Heart right ventricle (tissue), 16 donors: ENCODE measurements at regions of chr16 and their contacts with region 1.

Region 1: DNA sequence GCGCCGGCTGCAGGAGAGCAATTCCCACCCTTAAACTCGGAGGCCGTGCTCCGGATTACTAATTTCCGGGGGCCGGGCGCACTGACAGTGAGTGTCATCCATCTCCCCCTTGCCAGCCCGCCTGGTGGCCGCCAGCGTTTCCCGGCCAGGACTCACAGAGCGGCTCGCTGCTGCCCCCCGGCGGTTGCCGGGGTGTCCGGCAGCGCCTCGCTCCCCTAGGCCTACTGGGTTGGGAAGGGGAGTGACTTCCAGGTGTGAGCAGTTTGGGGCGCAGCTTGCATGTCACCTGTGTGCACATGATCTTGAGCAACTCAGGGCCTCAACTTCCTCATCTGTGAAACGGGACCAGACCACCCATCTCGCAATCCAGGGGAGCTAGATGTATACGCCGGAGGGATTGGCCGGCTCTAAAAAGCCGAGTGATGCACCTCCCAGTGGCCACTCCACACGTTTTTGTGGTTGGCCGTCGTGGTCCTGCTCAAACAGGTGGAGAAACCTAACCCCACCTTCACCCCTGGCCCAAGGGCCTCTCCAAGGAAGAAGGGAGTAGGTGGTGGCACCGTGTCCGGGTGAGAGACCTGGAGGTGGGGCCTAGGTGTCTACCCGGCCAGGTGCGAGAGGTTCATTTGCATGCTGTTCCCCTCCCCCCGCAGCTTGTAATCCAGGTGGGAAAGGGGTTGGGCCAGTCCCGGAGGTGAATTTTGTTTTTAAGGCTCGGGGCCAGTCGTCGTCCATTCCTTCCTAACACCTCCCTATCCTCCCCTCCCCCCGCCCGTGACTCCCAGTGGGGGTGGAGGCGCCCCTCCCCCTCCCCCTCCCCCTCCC is 2.4 kb upstream of the GSE1 start:
- DNase-seq: peak; percentile 84 to 88
- ATAC-seq: peak; percentile 22 to 69 (median 41)
- H3K4me3 ChIP-seq: peak overlapping the region; percentile 43 to 73 (median 65)
- H3K27ac ChIP-seq: peak overlapping the region; percentile 72 to 98 (median 92)
- H3K4me1 ChIP-seq: peaks cover 27 to 70% (median 56%) of the 10 kb centered on the region in 9 donors
- H3K27me3 ChIP-seq: no peaks in the 10 kb centered on the region
- CTCF ChIP-seq: peak; percentile 98 to 100 (median 99)

Region 2: GRCh38 chr16:85253084-85253941 is 357.4 kb before region 1 on chr16:
- intact Hi-C with region 1: no loop called
- DNase-seq: peak; percentile 34 to 66
- ATAC-seq: peak; percentile 48 to 85 (median 69)
- H3K4me3 ChIP-seq: no peak overlapping the region
- H3K27ac ChIP-seq: no peak overlapping the region
- H3K4me1 ChIP-seq: peaks cover 0 to 8% (median 0%) of the 10 kb centered on the region in 9 donors
- H3K27me3 ChIP-seq: peaks cover 0 to 8% (median 0%) of the 10 kb centered on the region in 7 donors
- CTCF ChIP-seq: peak; percentile 84 to 95 (median 92)

Region 3: DNA sequence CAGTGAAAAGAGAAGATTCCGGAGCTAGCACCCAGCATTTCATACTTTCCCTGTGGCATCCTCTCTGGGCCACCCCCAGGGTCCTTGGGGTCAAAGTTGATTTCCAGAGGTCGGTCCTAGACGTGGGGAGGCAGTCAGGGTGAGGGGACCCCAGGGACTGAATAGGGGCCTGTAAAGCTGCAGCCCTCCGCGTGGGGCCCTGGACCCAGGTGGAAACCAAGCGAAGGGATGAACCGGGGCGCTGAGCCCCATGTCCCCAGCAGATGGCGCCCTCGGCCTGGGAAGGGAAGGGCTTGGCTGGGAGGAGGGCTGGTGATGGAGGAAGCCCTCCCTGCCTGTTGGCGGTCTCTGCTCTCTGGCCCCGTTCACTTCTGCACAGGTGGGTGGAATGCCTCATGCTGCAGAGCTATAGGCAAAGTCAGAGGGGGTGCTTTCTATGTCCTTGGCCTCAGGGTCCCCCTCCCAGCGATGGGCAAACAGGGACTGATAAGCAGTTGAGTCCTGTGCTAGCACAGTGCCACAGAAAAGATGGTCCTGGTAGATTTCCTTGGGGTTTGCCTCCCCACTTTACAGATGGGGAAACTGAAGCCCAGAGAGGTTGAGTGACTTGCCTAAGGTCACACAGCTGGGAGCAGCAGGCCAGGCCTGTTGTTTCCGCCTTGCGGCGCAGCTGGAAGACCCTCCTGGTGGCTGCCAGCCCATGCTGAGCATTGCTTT is 335.0 kb before region 1 on chr16:
- intact Hi-C with region 1: loop called in 1 of 10 experiments (anchors 10 kb)
- DNase-seq: peak; percentile 63 to 78
- ATAC-seq: peak; percentile 48 to 85 (median 71)
- H3K4me3 ChIP-seq: no peak overlapping the region
- H3K27ac ChIP-seq: no peak overlapping the region
- H3K4me1 ChIP-seq: peaks cover 0 to 25% (median 0%) of the 10 kb centered on the region in 9 donors
- H3K27me3 ChIP-seq: no peaks in the 10 kb centered on the region
- CTCF ChIP-seq: peak; percentile 77 to 95 (median 91)

Region 4: DNA sequence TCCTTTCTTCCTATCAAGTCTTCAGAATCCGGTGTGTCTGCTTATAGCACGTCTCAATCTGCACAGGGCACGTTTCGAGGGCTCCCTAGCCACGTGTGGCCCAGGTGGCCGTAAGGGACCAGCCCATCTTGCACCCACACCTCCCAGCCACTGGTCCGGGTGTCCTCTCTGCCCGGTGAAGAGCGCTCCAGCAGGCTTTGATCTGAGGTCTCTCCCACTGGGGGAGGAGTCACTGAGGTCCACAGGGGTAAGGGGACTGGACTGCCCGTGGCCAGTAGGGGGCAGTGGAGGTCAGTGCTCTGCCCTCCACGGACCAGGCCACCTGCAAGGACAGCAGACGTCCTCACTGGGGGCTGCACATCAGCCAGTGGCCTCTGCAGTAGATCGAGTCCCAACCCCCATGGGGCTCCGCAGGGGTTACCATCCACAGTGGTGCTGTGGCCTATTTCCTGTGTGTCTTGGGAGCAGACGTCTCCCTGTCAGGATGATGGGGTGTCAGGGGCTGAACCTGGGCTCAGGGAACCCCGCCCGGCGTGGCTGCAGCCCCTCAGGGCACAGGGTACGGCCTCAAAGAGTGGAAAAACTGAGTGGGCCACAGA is 294.3 kb before region 1 on chr16:
- intact Hi-C with region 1: loop called in 1 of 10 experiments (anchors 10 kb)
- DNase-seq: peak; percentile 51 to 63
- ATAC-seq: peak; percentile 57 to 80 (median 73)
- H3K4me3 ChIP-seq: no peak overlapping the region
- H3K27ac ChIP-seq: no peak overlapping the region
- H3K4me1 ChIP-seq: peaks cover 9 to 53% (median 23%) of the 10 kb centered on the region in 9 donors
- H3K27me3 ChIP-seq: peaks cover 0 to 5% (median 0%) of the 10 kb centered on the region in 7 donors
- CTCF ChIP-seq: peak; percentile 64 to 90 (median 86)

Region 5: DNA sequence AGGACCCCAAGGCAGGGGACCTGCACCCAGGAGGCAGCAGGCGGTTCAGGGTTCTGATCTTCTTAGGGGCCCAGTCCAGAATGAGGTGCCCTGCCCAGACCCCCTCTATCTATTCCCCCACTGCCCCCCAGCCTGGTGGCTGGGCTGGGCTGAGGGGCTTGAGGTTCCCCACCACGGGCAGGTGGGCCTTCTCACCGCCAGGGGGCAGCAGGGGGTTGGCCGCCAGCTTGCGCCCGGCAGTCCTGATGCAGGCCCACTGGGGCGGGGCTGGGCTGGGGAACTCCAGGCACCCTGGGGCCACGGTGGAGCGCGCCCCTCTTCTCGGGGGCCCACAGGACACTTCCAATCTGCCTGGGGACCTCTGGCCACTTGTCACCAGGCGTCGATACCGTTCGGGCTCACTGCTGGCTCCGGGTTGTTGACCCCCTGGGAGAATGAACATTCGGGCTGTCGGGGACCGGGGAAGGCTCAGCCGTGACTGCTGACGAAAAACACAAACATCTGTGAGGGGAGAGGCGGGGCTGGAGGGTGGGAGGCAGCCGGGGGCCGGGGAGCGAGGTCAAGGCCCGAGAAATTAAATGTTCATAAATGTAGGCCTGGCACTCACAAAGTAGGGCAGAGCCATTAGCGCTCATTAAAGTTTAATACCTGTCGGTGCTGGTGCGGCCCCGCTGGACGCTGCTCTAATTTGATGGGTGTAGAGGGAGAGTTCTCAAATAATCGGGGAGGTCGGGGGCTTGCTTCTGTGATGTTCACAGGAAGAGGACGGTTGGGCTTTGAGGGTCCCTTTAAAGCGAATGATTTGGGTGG is 216.8 kb before region 1 on chr16:
- intact Hi-C with region 1: loop called in 1 of 10 experiments (anchors 10 kb)
- DNase-seq: peak; percentile 64 to 79
- ATAC-seq: peak; percentile 15 to 66 (median 42)
- H3K4me3 ChIP-seq: no peak overlapping the region
- H3K27ac ChIP-seq: no peak overlapping the region
- H3K4me1 ChIP-seq: peaks cover 22 to 51% (median 33%) of the 10 kb centered on the region in 9 donors
- H3K27me3 ChIP-seq: no peaks in the 10 kb centered on the region
- CTCF ChIP-seq: peak; percentile 73 to 92 (median 89)

Region 6: DNA sequence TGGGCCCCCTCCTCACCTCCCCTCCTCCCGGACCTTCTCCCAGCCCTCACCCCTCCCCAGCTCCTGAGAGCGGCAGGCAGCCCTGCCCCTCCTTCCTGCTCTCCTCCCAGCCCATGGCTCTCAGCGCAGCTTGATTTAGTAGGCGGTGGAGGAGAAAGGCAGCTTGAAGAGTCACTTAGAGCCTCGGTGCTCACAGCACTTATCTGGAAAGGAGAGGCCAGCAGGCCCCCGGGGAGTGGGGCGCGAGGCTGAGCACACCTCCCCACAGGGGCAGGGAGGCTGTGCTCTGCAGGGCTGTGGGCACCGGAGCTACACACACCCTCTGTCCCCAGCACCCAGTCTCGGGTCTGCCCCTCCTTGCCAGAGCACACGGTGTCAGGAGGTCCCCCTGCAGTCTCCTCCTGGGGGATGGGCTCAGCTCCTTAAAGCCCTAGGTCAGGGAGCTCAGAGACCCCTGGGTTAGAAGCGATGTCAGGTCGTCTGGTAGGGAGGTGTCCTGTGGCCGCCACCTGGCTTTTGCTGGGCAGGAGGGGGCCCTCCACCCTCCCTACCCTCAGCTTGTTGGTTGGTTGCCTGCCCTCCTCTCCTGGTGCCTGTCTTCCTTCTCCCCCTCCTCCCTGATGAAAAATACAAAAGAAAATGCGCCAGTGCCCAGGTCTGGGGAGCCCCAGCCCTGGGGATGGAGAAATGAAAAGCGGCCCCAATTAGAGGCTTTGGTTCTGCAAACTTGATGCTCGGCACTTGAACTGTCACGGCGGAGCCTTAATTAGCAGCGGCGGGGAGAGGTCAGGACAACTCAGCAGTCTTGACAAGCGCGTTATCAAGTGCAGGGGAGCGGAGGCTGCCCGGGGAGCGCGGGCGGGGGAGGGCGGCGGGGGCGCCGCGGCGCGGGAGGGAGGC is 148.7 kb before region 1 on chr16:
- intact Hi-C with region 1: loop called in 1 of 10 experiments (anchors 5 kb)
- DNase-seq: peak; percentile 55 to 71
- ATAC-seq: peak; percentile 30 to 60 (median 42)
- H3K4me3 ChIP-seq: peak overlapping the region in 9 of 10 donors; percentile 16 to 54 (median 43)
- H3K27ac ChIP-seq: peak overlapping the region; percentile 17 to 85 (median 72)
- H3K4me1 ChIP-seq: peaks cover 29 to 77% (median 50%) of the 10 kb centered on the region in 9 donors
- H3K27me3 ChIP-seq: peaks cover 0 to 35% (median 7%) of the 10 kb centered on the region in 7 donors
- CTCF ChIP-seq: no peak

Region 7: DNA sequence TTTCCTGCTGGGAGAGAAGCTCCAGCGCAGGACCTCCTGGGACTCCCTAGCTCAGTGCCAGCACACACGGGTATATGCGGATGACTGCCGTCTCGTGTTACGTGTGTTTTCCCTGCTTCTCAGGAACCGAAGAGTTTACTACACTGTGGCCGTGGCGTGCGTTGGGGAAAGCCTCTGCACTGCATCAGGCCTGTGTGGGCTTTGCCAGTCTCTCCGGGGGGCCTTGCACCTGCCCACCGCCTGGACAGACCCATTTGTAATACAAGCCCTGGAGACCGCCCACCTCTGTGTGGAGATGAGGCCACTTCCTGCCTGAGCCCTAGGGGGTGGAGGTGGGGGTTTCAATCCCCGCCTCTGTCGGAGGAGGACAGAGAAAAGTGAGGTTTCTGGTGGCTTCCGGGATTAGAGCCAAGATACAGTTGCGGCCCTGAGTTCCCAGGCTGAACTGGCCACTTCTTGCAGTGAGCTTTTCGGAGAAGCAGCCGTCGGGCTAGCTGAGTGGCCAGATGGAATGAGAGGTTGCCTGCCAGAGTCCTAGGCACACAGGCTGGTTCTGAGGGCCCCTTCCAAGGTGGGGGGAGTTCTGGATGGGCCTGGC is 41.0 kb before region 1 on chr16:
- intact Hi-C with region 1: loop called in 2 of 10 experiments (anchors 5 kb)
- DNase-seq: no peak
- ATAC-seq: no peak
- H3K4me3 ChIP-seq: peak overlapping the region in 1 of 10 donors; percentile 16
- H3K27ac ChIP-seq: peak overlapping the region in 2 of 10 donors; percentile 15 to 76
- H3K4me1 ChIP-seq: peaks cover 16 to 77% (median 33%) of the 10 kb centered on the region in 9 donors
- H3K27me3 ChIP-seq: no peaks in the 10 kb centered on the region
- CTCF ChIP-seq: no peak

Region 8: DNA sequence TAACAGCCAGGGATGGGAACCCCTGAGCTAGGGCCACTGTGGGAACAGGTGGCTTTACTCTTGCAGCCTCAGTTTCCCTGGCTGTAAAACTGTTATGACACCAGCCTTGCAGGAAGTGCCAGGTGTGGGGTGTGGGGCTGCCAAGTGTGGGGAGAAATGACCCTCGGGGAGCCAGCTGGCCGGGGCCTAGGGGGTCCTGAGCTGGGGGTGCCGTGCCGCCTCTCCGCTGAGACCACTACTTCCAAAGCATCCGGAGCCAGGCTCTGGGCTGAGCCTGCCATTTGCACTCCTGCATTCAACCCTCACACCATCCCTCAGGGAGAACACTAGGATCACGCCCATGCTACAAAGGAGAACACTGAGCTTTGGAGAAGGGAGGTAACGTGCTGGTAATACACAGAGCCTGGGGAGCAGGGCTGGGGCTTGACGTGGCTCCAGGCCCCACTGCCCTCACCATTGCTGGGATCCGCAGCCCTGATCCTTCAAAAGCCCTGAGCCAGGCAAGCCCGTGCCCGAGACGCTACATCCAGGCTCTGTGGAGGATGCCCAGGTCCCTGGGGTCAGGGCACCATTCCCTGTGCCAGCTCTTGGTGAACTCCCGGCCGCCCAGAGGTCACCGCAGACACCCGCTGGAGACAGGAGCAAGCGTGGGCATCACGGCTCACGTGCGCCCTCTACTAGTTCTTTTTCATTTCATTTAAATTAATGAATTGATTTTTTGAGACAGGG is 106.8 kb after region 1 on chr16:
- intact Hi-C with region 1: no loop called
- DNase-seq: peak; percentile 57 to 68
- ATAC-seq: peak; percentile 41 to 74 (median 59)
- H3K4me3 ChIP-seq: no peak overlapping the region
- H3K27ac ChIP-seq: no peak overlapping the region
- H3K4me1 ChIP-seq: peaks cover 0 to 35% (median 21%) of the 10 kb centered on the region in 9 donors
- H3K27me3 ChIP-seq: peaks cover 0 to 7% (median 0%) of the 10 kb centered on the region in 7 donors
- CTCF ChIP-seq: peak; percentile 72 to 88 (median 83)